ENCODE measurements at regions of chr5 and their contacts with region 1.

Region 1: DNA sequence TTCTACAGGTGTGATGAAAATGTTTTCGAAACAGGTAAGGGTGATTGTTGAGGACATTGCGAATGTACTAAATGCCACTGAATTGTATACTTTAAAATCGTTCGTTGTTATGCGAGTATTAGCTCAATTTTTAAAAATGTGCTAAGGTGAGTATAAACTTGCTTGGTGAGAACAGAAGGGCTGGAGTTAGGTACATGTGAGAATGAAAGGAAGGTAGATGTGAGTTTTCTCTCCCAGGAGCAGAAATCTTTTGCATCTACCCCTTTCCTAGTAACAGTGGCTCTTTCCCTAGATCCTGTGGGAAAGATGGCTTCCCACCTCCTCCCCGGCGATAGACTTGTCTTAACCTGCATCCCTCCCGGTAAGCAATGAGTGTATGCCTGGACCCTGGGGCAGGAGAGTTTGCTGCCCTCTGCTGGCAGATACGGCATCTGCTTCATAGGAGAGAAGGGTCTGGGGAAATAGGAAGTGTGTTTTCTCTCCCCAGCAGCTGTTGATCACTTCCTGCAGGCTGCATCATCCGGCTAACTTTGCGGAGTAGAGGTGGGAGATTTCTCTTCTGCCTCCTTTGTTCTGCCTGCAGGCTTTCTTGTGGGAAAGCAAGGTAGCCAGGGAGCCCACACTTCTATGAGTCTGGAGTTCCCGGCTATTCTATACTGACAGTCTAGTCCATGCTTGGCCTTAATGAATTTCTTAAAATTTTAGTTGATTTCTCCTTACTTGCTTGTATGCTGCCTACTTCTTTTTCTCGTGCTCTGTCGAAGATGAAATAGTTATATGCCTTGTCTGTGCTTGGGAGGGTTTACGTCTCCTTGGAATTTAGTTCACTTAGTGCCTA is 373.3 kb upstream of the SEMA6A start:
- DNase-seq: peak; percentile 8
- H3K4me3 ChIP-seq: no peak overlapping the region
- H3K27ac ChIP-seq: no peak overlapping the region
- H3K4me1 ChIP-seq: no peaks in the 10 kb centered on the region
- H3K27me3 ChIP-seq: no peaks in the 10 kb centered on the region
- CTCF ChIP-seq: peak; percentile 26 to 29
- POLR2A ChIP-seq: no peak

Region 2: GRCh38 chr5:116574367-116575325 is 373.3 kb before region 1 on chr5 and contains the start of gene SEMA6A:
- CTCF ChIA-PET with region 1: no interaction called
- POLR2A ChIA-PET with region 1: no interaction called
- dilution Hi-C with region 1: no loop called
- intact Hi-C with region 1: loop called (anchors 1 kb)
- DNase-seq: peak; percentile 91
- H3K4me3 ChIP-seq: peak within 1 kb of the TSS; percentile 53 to 61 (median 58)
- H3K27ac ChIP-seq: no peak within 1 kb of the TSS
- H3K4me1 ChIP-seq: peaks cover 17% of the 10 kb centered on the region
- H3K27me3 ChIP-seq: peaks cover 44 to 70% of the 10 kb centered on the region in 2 experiments
- CTCF ChIP-seq: no peak
- POLR2A ChIP-seq: no peak
- total RNA-seq, gene SEMA6A: 1.4 and 1.5 TPM in 2 replicates

Region 3: DNA sequence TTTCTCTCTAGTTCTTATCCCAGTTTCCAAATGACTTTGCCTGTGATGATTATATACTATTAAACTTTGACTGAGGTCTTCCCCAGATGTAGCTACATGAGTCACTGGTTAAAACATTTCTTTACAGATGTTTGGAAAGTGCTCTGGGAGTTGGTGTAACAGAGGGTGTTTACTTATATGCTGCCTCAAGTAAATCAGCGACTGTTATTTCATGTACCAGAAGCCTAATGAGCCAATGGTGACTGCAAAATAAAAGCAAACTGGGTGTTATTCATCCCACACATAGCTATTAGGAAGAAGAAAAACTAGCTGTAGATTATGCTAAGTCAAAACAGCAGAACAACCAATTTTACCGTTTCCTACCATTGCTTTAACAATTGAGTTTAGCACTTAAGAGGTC is 556.4 kb after region 1 on chr5:
- CTCF ChIA-PET with region 1: no interaction called
- POLR2A ChIA-PET with region 1: no interaction called
- dilution Hi-C with region 1: no loop called
- intact Hi-C with region 1: no loop called
- DNase-seq: no peak
- H3K4me3 ChIP-seq: no peak overlapping the region
- H3K27ac ChIP-seq: no peak overlapping the region
- H3K4me1 ChIP-seq: no peaks in the 10 kb centered on the region
- H3K27me3 ChIP-seq: no peaks in the 10 kb centered on the region
- CTCF ChIP-seq: no peak
- POLR2A ChIP-seq: no peak

Measured in endothelial cell of umbilical vein (primary cell).